ENCODE measurements at regions of chr3 and their contacts with region 1.

Region 1: GRCh38 chr3:38017442-38018295 is 11.8 kb downstream of the PLCD1 start:
- DNase-seq: no peak
- ATAC-seq: no peak
- H3K4me3 ChIP-seq: no peak overlapping the region
- H3K27ac ChIP-seq: no peak overlapping the region
- H3K4me1 ChIP-seq: no peaks in the 10 kb centered on the region
- H3K27me3 ChIP-seq: no peaks in the 10 kb centered on the region
- CTCF ChIP-seq: no peak

Region 2: GRCh38 chr3:37819591-37819990 is 198.1 kb before region 1 on chr3:
- CTCF ChIA-PET with region 1: no interaction called
- POLR2A ChIA-PET with region 1: no interaction called
- intact Hi-C with region 1: no loop called
- DNase-seq: no peak
- ATAC-seq: no peak
- H3K4me3 ChIP-seq: no peak overlapping the region
- H3K27ac ChIP-seq: no peak overlapping the region
- H3K4me1 ChIP-seq: no peaks in the 10 kb centered on the region
- H3K27me3 ChIP-seq: peaks cover 62% of the 10 kb centered on the region
- CTCF ChIP-seq: no peak

Region 3: GRCh38 chr3:37862903-37863815 is 154.5 kb before region 1 on chr3:
- CTCF ChIA-PET with region 1: interaction called, 13 read pairs
- POLR2A ChIA-PET with region 1: no interaction called
- intact Hi-C with region 1: no loop called
- DNase-seq: no peak
- ATAC-seq: no peak
- H3K4me3 ChIP-seq: peak overlapping the region; percentile 66
- H3K27ac ChIP-seq: no peak overlapping the region
- H3K4me1 ChIP-seq: peaks cover 33% of the 10 kb centered on the region
- H3K27me3 ChIP-seq: peaks cover 46% of the 10 kb centered on the region
- CTCF ChIP-seq: no peak